H1 (cell line): ENCODE measurements at regions of chr5 and their contacts with region 1.

Region 1: DNA sequence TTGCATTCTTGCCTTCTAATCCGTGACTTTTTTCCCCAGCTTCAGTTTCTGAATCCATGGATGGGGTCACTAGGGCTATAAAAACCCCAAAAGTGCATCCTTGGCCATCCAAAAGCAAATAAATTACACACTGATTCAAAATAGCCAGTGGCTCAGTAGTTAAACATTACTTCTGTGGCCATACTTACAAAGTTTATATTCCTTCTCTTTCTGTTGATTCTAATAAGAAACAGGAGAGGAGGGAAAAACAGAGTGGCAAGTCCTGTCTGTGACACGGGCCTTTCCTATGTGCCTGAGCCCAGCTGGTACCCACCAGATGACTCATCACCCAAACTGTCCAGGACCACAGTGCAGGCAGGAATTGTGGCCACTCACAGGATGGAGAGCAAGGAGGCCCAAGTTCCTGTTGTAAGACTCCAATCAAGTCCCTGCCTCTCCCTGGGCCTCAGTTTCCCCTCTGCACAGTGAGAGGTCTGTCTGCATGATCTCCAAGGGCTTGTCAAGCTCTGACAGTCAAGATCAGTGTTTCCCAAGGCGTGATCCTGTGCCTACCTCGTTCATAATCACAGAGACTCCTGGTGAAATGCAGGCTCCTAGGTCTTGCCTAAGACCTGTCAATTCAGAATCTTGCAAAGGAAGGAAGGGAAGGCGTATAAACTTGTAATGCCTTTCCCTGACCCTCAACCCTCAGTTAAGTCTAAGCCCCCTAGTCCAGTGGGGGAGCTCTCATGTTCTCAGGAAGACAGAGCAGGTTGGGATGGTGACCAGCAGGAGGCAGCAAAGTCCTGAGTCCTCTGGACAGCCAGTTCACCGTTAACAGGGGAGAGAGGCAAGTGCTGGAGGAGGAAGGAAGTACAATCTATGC is 29.5 kb downstream of the TNIP1 start:
- DNase-seq: peak; percentile 63 to 88
- H3K4me3 ChIP-seq: no peak overlapping the region
- H3K27ac ChIP-seq: no peak overlapping the region
- H3K4me1 ChIP-seq: no peaks in the 10 kb centered on the region
- H3K27me3 ChIP-seq: no peaks in the 10 kb centered on the region
- CTCF ChIP-seq: peak; percentile 90 to 99 (median 98)
- EP300 ChIP-seq: no peak
- POLR2A ChIP-seq: no peak
- RAD21 ChIP-seq: peak; percentile 90 to 94

Region 2: GRCh38 chr5:151020304-151021110 is 30.8 kb before region 1 on chr5 and contains the start of gene GPX3:
- CTCF ChIA-PET with region 1: interaction called, 105 read pairs
- POLR2A ChIA-PET with region 1: no interaction called
- DNase-seq: peak; percentile 49 to 92
- H3K4me3 ChIP-seq: peak within 1 kb of the TSS; percentile 50 to 80 (median 70)
- H3K27ac ChIP-seq: no peak within 1 kb of the TSS
- H3K4me1 ChIP-seq: peaks cover 0 to 1% (median 0%) of the 10 kb centered on the region in 4 experiments; a peak in 1 of 7 replicates
- H3K27me3 ChIP-seq: peaks cover 0 to 8% (median 5%) of the 10 kb centered on the region in 4 experiments; a peak in 6 of 7 replicates
- CTCF ChIP-seq: no peak
- EP300 ChIP-seq: no peak
- POLR2A ChIP-seq: peak in 1 of 2 experiments; percentile 69; a peak in 2 of 3 replicates
- RAD21 ChIP-seq: no peak
- total RNA-seq, gene GPX3: 26.4 and 27.8 TPM in 2 replicates

Region 3: GRCh38 chr5:151080623-151081430 is 29.5 kb after region 1 on chr5 and contains the start of gene TNIP1:
- CTCF ChIA-PET with region 1: interaction called, 442 read pairs
- POLR2A ChIA-PET with region 1: interaction called, 3 read pairs
- DNase-seq: peak; percentile 53 to 92
- H3K4me3 ChIP-seq: peak within 1 kb of the TSS; percentile 71 to 93 (median 80)
- H3K27ac ChIP-seq: peak within 1 kb of the TSS; percentile 71
- H3K4me1 ChIP-seq: peaks cover 1 to 6% (median 4%) of the 10 kb centered on the region in 4 experiments
- H3K27me3 ChIP-seq: no peaks in the 10 kb centered on the region
- CTCF ChIP-seq: no peak
- EP300 ChIP-seq: no peak
- POLR2A ChIP-seq: peak; percentile 22 to 31; a peak in 1 of 3 replicates
- RAD21 ChIP-seq: no peak
- total RNA-seq, gene TNIP1: 31.9 and 33.9 TPM in 2 replicates

Region 4: GRCh38 chr5:151101151-151101550 is 49.9 kb after region 1 on chr5:
- CTCF ChIA-PET with region 1: interaction called, 777 read pairs
- POLR2A ChIA-PET with region 1: no interaction called
- DNase-seq: no peak
- H3K4me3 ChIP-seq: no peak overlapping the region
- H3K27ac ChIP-seq: no peak overlapping the region
- H3K4me1 ChIP-seq: peaks cover 0 to 2% (median 0%) of the 10 kb centered on the region in 4 experiments; a peak in 1 of 7 replicates
- H3K27me3 ChIP-seq: no peaks in the 10 kb centered on the region
- CTCF ChIP-seq: no peak
- EP300 ChIP-seq: no peak
- POLR2A ChIP-seq: no peak
- RAD21 ChIP-seq: no peak

Region 5: DNA sequence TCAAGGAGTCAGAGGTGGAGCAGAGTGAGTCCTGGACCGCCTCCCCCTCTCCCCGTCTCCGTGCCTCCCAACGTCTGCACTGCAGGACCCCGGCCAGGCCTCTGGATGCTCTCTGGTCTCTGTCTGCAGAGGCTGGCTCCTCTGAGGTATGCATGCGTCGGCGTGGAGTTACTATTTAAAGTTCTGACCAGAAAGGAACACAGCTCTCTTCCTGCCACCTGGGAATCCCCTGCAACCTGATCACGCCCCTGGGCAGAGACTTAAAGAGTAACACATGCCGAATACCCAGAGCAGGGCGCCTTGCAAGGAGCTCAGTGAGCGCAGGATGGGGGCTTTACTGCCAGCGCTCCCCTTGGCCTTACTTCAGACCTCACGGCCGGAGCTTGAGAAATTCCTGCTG is 90.2 kb after region 1 on chr5:
- CTCF ChIA-PET with region 1: interaction called, 17 read pairs
- POLR2A ChIA-PET with region 1: no interaction called
- DNase-seq: peak in 1 of 2 experiments; percentile 58
- H3K4me3 ChIP-seq: no peak overlapping the region
- H3K27ac ChIP-seq: peak overlapping the region; percentile 34; the same call in 1 of the 2 replicates
- H3K4me1 ChIP-seq: peaks cover 0 to 12% (median 7%) of the 10 kb centered on the region in 4 experiments; a peak in 5 of 7 replicates
- H3K27me3 ChIP-seq: no peaks in the 10 kb centered on the region; a peak in 1 of 7 replicates
- CTCF ChIP-seq: no peak
- EP300 ChIP-seq: no peak
- POLR2A ChIP-seq: peak in 1 of 2 experiments; percentile 32; a peak in 1 of 3 replicates
- RAD21 ChIP-seq: no peak

Region 6: GRCh38 chr5:151239237-151239861 is 188.1 kb after region 1 on chr5:
- CTCF ChIA-PET with region 1: interaction called, 11 read pairs
- POLR2A ChIA-PET with region 1: no interaction called
- DNase-seq: peak in 1 of 2 experiments; percentile 89
- H3K4me3 ChIP-seq: no peak overlapping the region
- H3K27ac ChIP-seq: no peak overlapping the region
- H3K4me1 ChIP-seq: peaks cover 3 to 11% (median 7%) of the 10 kb centered on the region in 4 experiments; a peak in 6 of 7 replicates
- H3K27me3 ChIP-seq: no peaks in the 10 kb centered on the region
- CTCF ChIP-seq: peak; percentile 86 to 94 (median 87)
- EP300 ChIP-seq: no peak
- POLR2A ChIP-seq: no peak
- RAD21 ChIP-seq: peak; percentile 82 to 89